Ascending aorta (tissue), 2 donors: ENCODE measurements at regions of chr15 and their contacts with region 1.

Region 1: GRCh38 chr15:67521029-67521811 is at the start of gene C15orf61:
- DNase-seq: peak; percentile 40 to 90
- H3K4me3 ChIP-seq: peak within 1 kb of the TSS; percentile 76 to 78
- H3K27ac ChIP-seq: peak within 1 kb of the TSS; percentile 91 to 93
- H3K4me1 ChIP-seq: peaks cover 0 to 11% of the 10 kb centered on the region in 2 donors
- H3K27me3 ChIP-seq: no peaks in the 10 kb centered on the region
- CTCF ChIP-seq: no peak
- total RNA-seq, gene C15orf61: 2.3 TPM

Region 2: GRCh38 chr15:67043939-67044771 is 477.1 kb before region 1 on chr15:
- intact Hi-C with region 1: no loop called
- DNase-seq: peak in 1 of 2 donors; percentile 88
- H3K4me3 ChIP-seq: no peak overlapping the region
- H3K27ac ChIP-seq: peak overlapping the region; percentile 76 to 90
- H3K4me1 ChIP-seq: peaks cover 3 to 44% of the 10 kb centered on the region in 2 donors
- H3K27me3 ChIP-seq: no peaks in the 10 kb centered on the region
- CTCF ChIP-seq: no peak

Region 3: GRCh38 chr15:67542420-67543347 is 21.5 kb after region 1 on chr15 and contains the start of gene MAP2K5:
- intact Hi-C with region 1: loop called (anchors 1 kb)
- DNase-seq: peak; percentile 46 to 93
- H3K4me3 ChIP-seq: peak within 1 kb of the TSS; percentile 96
- H3K27ac ChIP-seq: peak within 1 kb of the TSS; percentile 81 to 84
- H3K4me1 ChIP-seq: peaks cover 0 to 9% of the 10 kb centered on the region in 2 donors
- H3K27me3 ChIP-seq: no peaks in the 10 kb centered on the region
- CTCF ChIP-seq: no peak
- total RNA-seq, gene MAP2K5: 1.1 TPM

Region 4: GRCh38 chr15:67601073-67601472 is 79.9 kb after region 1 on chr15:
- intact Hi-C with region 1: no loop called
- DNase-seq: no peak
- H3K4me3 ChIP-seq: no peak overlapping the region
- H3K27ac ChIP-seq: no peak overlapping the region
- H3K4me1 ChIP-seq: no peaks in the 10 kb centered on the region
- H3K27me3 ChIP-seq: no peaks in the 10 kb centered on the region
- CTCF ChIP-seq: no peak